ENCODE measurements at regions of chr11 and their contacts with region 1.

Region 1: DNA sequence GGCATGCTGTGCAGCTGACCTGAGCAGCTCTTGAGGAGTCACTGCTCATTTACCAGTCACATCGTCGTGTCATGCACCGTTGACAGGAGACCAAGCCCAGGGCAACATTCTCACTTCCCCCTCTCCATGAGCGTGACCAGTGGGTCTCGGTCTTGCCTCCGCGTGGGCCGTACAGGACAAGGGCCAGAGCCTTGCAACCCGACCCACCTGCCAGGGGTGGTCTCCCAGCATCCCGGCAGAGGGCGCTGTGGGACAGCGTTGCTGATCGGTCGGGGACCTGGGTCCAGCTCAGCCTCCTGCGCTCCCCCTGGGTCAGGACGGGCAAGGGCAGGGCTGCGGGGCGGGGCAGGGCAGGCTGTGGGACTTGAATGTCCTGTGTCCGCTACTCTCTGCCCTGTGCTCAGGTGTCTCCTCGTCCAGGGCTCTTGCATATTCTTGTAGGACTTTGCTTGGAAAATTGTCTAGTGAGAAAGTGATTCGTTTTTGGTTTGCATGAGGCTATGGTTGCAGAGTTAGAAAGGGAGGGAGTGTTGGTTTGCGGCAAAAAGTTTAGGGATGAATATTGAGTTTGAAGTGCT is 16.2 kb downstream of the EIF4G2 start:
- DNase-seq: peak; percentile 91 to 97
- ATAC-seq: peak; percentile 95
- H3K4me3 ChIP-seq: no peak overlapping the region
- H3K27ac ChIP-seq: no peak overlapping the region
- H3K4me1 ChIP-seq: no peaks in the 10 kb centered on the region
- H3K27me3 ChIP-seq: no peaks in the 10 kb centered on the region

Region 2: GRCh38 chr11:10455637-10456487 is 336.6 kb before region 1 on chr11:
- intact Hi-C with region 1: no loop called
- DNase-seq: peak in 1 of 2 donors; percentile 77
- ATAC-seq: peak; percentile 68
- H3K4me3 ChIP-seq: no peak overlapping the region
- H3K27ac ChIP-seq: no peak overlapping the region
- H3K4me1 ChIP-seq: no peaks in the 10 kb centered on the region
- H3K27me3 ChIP-seq: no peaks in the 10 kb centered on the region

Region 3: GRCh38 chr11:11022125-11022730 is 229.7 kb after region 1 on chr11:
- intact Hi-C with region 1: loop called (anchors 1 to 2 kb)
- DNase-seq: no peak
- ATAC-seq: no peak
- H3K4me3 ChIP-seq: no peak overlapping the region
- H3K27ac ChIP-seq: no peak overlapping the region
- H3K4me1 ChIP-seq: no peaks in the 10 kb centered on the region
- H3K27me3 ChIP-seq: no peaks in the 10 kb centered on the region

Region 4: GRCh38 chr11:11028017-11028692 is 235.7 kb after region 1 on chr11:
- intact Hi-C with region 1: loop called in 1 of 2 experiments (anchors 1 kb)
- DNase-seq: peak; percentile 77 to 90
- ATAC-seq: peak; percentile 73
- H3K4me3 ChIP-seq: no peak overlapping the region
- H3K27ac ChIP-seq: no peak overlapping the region
- H3K4me1 ChIP-seq: no peaks in the 10 kb centered on the region
- H3K27me3 ChIP-seq: no peaks in the 10 kb centered on the region